Activated CD8-positive, alpha-beta T cell treated with anti-CD3 and anti-CD28 coated beads for 36 hours (primary cell): ENCODE measurements at regions of chr14 and their contacts with region 1.

Region 1: GRCh38 chr14:59576332-59577294 is at the start of gene CCDC175:
- DNase-seq: peak; percentile 93
- ATAC-seq: peak; percentile 100
- H3K4me3 Mint-ChIP-seq: peak within 1 kb of the TSS; percentile 67
- H3K27ac Mint-ChIP-seq: no peak within 1 kb of the TSS
- H3K4me1 Mint-ChIP-seq: peaks cover 5% of the 10 kb centered on the region
- H3K27me3 Mint-ChIP-seq: peaks cover 12% of the 10 kb centered on the region
- CTCF ChIP-seq: peak; percentile 96
- total RNA-seq, gene CCDC175: not detected

Region 2: GRCh38 chr14:59126710-59127432 is 449.7 kb before region 1 on chr14:
- CTCF ChIA-PET with region 1: interaction called, 17 read pairs
- POLR2A ChIA-PET with region 1: no interaction called
- intact Hi-C with region 1: loop called (anchors 2 kb)
- DNase-seq: peak; percentile 35
- ATAC-seq: peak; percentile 75
- H3K4me3 Mint-ChIP-seq: no peak overlapping the region
- H3K27ac Mint-ChIP-seq: no peak overlapping the region
- H3K4me1 Mint-ChIP-seq: no peaks in the 10 kb centered on the region
- H3K27me3 Mint-ChIP-seq: peaks cover 12% of the 10 kb centered on the region
- CTCF ChIP-seq: peak; percentile 84

Region 3: GRCh38 chr14:59507063-59507780 is 69.4 kb before region 1 on chr14:
- CTCF ChIA-PET with region 1: interaction called, 75 read pairs
- POLR2A ChIA-PET with region 1: no interaction called
- intact Hi-C with region 1: loop called (anchors 5 kb)
- DNase-seq: peak; percentile 77
- ATAC-seq: peak; percentile 97
- H3K4me3 Mint-ChIP-seq: no peak overlapping the region
- H3K27ac Mint-ChIP-seq: no peak overlapping the region
- H3K4me1 Mint-ChIP-seq: peaks cover 8% of the 10 kb centered on the region
- H3K27me3 Mint-ChIP-seq: peaks cover 6% of the 10 kb centered on the region
- CTCF ChIP-seq: peak; percentile 83

Region 4: GRCh38 chr14:59543873-59544272 is 32.7 kb before region 1 on chr14:
- CTCF ChIA-PET with region 1: interaction called, 12 read pairs
- POLR2A ChIA-PET with region 1: interaction called, 3 read pairs
- intact Hi-C with region 1: no loop called
- DNase-seq: no peak
- ATAC-seq: no peak
- H3K4me3 Mint-ChIP-seq: no peak overlapping the region
- H3K27ac Mint-ChIP-seq: no peak overlapping the region
- H3K4me1 Mint-ChIP-seq: no peaks in the 10 kb centered on the region
- H3K27me3 Mint-ChIP-seq: peaks cover 4% of the 10 kb centered on the region
- CTCF ChIP-seq: no peak

Region 5: DNA sequence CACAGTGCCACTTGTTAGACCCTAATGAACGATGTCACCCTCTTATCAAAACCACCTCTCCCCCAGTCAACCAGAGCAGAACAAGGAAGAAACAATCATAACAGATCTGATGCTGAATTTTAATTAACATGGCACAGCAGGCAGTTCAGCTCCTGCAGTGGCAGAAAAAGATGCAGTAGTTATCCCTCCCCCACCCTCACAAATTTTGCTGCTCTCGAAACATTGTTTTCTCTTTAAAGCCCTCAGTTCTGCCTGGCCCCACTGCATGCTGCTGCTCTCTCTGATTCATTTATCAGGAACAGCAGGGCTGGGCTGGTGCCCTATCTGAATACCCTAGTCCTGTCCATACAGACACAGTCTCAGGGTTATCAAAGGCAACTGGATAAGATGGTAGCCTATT is 12.2 kb before region 1 on chr14:
- CTCF ChIA-PET with region 1: interaction called, 23 read pairs
- POLR2A ChIA-PET with region 1: no interaction called
- intact Hi-C with region 1: no loop called
- DNase-seq: no peak
- ATAC-seq: no peak
- H3K4me3 Mint-ChIP-seq: no peak overlapping the region
- H3K27ac Mint-ChIP-seq: no peak overlapping the region
- H3K4me1 Mint-ChIP-seq: no peaks in the 10 kb centered on the region
- H3K27me3 Mint-ChIP-seq: peaks cover 22% of the 10 kb centered on the region
- CTCF ChIP-seq: no peak